Activated CD4-positive, alpha-beta T cell treated with anti-CD3 and anti-CD28 coated beads, Interleukin-2, amount 10 ng/mL, durations not matched to agents 24 days and 14 days (primary cell): ENCODE measurements at regions of chr19 and their contacts with region 1.

Region 1: DNA sequence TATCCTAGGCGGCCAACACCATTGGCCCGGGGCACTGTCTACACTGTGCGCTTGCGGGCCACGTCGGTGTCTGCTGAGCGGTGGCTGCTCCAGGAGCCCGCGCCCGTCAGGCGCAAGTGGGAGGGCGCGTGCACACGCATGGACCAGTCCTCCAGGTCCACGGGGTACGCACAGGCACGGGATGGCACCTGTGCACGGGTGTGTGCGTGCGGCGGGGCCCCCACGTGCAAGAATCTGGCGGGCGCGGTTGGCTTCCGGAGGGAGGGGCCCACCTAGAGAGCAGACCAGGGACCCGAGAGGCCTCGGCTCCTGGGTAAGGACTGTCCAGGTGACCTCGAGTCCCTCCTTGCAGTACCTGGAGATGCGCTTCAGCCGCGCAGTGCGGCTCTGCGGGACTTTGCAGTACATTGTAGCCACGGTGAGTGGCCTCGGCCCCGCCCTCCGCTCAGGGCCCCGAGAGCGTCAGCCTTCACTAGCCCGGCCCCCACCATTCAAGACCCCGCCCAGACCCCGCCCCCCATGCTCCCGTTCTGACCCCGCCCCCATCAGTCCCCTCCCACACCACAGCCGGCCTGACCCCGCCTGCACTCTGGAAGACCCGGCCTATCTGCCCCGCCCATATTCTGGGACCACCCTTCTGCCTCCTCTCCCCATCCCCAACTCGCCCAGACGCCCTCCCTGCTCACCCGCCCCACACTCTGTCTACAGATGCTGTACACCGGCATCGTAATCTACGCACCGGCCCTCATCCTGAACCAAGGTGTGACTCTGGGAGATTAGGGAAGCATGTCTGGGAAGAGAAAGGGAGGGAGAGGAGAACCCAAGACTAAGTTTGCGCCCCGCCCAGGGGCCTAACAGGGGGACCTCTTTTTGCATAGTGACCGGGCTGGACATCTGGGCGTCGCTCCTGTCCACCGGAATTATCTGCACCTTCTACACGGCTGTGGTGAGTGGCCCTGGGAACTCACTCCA is 2.3 kb downstream of the SLC5A5 start:
- DNase-seq: peak; percentile 88
- H3K4me3 Mint-ChIP-seq: peak overlapping the region; percentile 90
- H3K27ac Mint-ChIP-seq: peak overlapping the region; percentile 53
- H3K4me1 Mint-ChIP-seq: peaks cover 4% of the 10 kb centered on the region
- H3K27me3 Mint-ChIP-seq: peaks cover 1% of the 10 kb centered on the region

Region 2: DNA sequence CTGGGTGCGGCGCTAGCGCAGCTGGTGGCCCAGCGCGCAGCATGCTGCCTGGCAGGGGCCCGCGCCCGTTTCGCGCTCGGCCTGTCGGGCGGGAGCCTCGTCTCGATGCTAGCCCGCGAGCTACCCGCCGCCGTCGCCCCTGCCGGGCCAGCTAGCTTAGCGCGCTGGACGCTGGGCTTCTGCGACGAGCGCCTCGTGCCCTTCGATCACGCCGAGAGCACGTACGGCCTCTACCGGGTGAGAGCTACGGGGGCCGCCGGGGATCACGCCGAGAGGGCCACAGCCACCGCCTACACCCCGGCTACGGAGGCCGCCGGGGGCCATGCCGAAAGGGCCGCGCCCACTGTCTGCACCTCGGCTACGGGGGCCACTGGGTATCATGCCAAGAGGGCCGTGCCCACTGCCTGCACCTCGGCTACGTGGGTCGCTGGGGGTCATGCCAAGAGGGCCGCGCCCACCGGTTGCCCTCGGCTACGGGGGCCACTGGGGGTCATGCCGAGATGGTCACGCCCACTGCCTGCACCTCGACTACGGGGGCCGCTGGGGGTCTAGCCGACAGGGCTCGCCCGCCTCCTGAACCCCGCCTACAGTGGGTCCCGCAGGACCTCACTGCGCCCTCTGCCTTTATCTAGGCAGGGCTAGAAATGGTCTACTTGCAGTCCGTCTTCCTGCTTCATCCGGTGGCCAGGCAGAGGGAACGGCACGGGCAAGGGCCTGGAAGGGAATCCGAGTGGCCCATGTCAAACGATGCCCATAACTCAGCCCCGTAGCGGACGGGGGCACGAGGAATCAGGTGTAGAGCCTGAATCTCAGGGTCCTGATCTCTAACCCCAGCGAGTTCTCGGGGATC is 362.1 kb before region 1 on chr19:
- intact Hi-C with region 1: no loop called
- DNase-seq: peak; percentile 95
- H3K4me3 Mint-ChIP-seq: peak overlapping the region; percentile 88
- H3K27ac Mint-ChIP-seq: peak overlapping the region; percentile 93
- H3K4me1 Mint-ChIP-seq: peaks cover 22% of the 10 kb centered on the region
- H3K27me3 Mint-ChIP-seq: no peaks in the 10 kb centered on the region

Region 3: DNA sequence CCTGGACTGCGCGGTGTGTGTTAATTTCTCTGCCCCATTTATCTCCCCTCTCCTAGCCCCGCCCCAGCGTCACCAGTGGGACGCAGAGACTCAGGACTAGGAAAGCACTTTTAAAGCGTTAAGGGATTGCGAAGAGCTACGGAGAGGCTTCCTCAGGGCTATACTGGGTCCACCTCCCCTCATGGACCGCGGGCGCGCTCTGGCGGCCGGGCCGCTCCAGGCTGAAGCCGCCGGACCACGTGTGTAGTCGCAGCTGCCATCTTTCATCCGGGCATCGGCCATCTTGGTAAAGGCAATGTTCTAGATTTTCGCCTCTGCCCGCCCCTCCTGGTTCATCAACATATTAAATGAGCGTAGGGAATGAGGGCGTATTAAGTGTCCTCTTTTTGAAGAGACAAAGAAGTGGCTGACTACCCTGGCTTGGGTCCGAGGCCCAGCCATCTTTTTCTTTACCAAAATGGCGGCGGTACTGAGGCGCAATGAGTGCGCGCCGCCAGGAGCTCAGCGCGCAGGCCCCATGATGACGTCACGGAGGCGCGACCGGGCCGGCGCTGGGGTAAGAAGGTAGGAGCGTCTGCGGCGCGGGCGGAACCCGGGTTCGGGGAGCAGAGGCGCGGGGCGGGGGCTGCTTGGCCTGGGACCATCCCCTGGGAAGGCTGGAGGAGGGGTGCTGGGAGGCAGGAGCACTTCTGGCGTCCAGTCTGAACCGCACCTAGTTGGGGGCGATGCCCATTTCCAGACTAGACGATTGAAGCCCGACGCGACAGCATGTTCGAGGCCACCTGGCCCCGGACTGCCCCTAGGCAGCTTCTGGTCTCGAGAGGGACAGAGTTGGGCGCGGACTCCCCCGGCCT is 58.6 kb after region 1 on chr19 and contains the start of gene CCDC124:
- intact Hi-C with region 1: loop called (anchors 2 kb)
- DNase-seq: peak; percentile 98
- H3K4me3 Mint-ChIP-seq: peak within 1 kb of the TSS; percentile 92
- H3K27ac Mint-ChIP-seq: peak within 1 kb of the TSS; percentile 94
- H3K4me1 Mint-ChIP-seq: peaks cover 18% of the 10 kb centered on the region
- H3K27me3 Mint-ChIP-seq: no peaks in the 10 kb centered on the region
- total RNA-seq, gene CCDC124: 126 and 136 TPM in 2 replicates

Region 4: DNA sequence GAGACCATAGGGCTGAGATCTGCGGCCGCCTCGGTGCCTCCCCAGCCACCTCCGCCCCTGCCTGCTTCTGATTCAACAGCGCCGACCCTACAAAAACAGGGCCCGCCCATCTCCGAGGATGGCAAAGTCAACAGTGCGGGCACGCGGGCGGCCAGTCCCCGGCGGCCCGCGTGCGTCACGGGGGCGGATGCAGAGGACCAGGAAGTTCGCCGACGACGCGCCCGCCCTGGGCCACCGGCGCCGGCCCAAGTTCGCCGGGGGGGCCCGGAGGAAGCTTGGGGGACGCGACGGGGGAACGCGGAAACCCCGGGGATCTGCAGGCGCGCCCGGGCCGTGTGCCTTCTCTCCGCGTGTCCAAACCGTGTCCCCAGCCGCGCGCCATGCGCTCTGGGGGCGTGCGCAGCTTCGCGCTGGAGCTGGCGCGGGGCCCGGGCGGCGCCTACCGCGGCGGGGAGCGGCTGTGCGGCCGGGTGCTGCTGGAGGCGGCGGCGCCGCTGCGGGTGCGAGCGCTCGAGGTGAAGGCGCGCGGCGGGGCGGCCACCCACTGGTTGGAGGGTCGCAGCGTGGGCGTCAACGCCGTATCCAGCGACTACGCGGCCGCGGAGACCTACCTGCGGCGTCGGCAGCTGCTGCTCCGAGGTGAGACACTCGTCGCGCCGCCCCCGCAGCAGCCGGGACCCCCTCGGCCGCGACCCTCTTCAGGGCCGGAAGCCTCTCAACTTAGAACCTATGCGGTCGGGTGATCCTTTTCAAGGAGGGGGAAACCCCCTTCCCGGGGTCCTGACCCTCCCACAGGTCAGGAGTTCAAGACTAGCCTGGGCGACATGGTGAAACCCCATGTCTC is 127.1 kb after region 1 on chr19:
- intact Hi-C with region 1: loop called (anchors 2 kb)
- DNase-seq: peak; percentile 97
- H3K4me3 Mint-ChIP-seq: peak overlapping the region; percentile 93
- H3K27ac Mint-ChIP-seq: peak overlapping the region; percentile 99
- H3K4me1 Mint-ChIP-seq: peaks cover 15% of the 10 kb centered on the region
- H3K27me3 Mint-ChIP-seq: no peaks in the 10 kb centered on the region

Region 5: DNA sequence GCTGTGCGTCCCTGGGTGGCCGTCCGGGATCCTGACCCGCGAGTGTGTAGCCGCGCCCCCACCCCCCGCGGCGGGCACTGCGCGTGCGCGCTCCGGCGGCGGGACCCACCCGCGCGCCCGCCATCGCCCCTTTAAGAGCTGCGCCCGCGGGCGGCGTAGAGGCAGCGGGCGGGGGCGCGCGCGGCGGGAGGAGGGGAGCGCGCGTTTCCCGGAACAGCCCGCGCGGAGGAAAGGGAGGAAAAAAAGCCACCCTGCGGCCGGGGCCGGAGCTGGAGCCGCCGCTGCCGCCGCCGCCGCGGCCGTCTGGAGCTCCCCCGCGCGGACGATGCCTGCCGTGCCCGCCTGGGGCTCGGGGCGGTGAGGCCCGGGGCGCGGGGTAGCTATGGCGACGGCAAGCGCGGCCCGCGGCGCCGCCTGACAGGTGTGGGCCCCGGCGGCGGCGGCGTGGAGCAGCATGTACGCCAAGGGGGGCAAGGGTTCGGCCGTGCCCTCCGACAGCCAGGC is 545.2 kb after region 1 on chr19 and contains the start of gene SSBP4:
- intact Hi-C with region 1: no loop called
- DNase-seq: peak; percentile 94
- H3K4me3 Mint-ChIP-seq: peak within 1 kb of the TSS; percentile 99
- H3K27ac Mint-ChIP-seq: peak within 1 kb of the TSS; percentile 89
- H3K4me1 Mint-ChIP-seq: peaks cover 72% of the 10 kb centered on the region
- H3K27me3 Mint-ChIP-seq: no peaks in the 10 kb centered on the region
- total RNA-seq, gene SSBP4: 154 TPM in 2 replicates